ENCODE measurements at regions of chr21 and their contacts with region 1.

Region 1: GRCh38 chr21:28215214-28215954 is 777.3 kb downstream of the LTN1 start:
- DNase-seq: no peak
- ATAC-seq: peak; percentile 93 to 98 (median 96)
- H3K4me3 ChIP-seq: peak overlapping the region; percentile 15
- H3K27ac ChIP-seq: peak overlapping the region; percentile 67
- H3K4me1 ChIP-seq: peaks cover 16% of the 10 kb centered on the region
- H3K27me3 ChIP-seq: no peaks in the 10 kb centered on the region
- CTCF ChIP-seq: no peak

Region 2: GRCh38 chr21:28074676-28075075 is 140.7 kb before region 1 on chr21:
- intact Hi-C with region 1: loop called in 1 of 2 experiments (anchors 10 kb)
- DNase-seq: no peak
- ATAC-seq: no peak
- H3K4me3 ChIP-seq: no peak overlapping the region
- H3K27ac ChIP-seq: no peak overlapping the region
- H3K4me1 ChIP-seq: peaks cover 10% of the 10 kb centered on the region
- H3K27me3 ChIP-seq: no peaks in the 10 kb centered on the region
- CTCF ChIP-seq: no peak

Region 3: DNA sequence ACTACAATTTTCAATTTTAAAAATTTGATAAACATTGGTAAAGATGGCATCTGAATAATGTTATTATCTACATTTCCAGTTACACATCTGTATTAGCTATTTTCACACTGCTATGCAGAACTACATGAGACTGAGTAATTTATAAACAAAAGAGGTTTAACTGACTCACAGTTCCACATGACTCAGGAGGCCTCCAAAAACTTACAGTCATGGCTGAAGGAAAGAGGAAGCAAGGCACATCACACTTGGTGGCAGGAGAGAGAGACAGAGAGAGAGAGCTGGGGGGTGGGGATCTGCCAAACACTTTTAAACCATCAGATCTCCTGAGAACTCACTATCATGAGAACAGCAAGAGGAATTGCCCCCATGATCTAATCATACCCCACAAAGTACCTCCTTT is 72.7 kb before region 1 on chr21:
- intact Hi-C with region 1: no loop called
- DNase-seq: no peak
- ATAC-seq: no peak
- H3K4me3 ChIP-seq: no peak overlapping the region
- H3K27ac ChIP-seq: no peak overlapping the region
- H3K4me1 ChIP-seq: no peaks in the 10 kb centered on the region
- H3K27me3 ChIP-seq: no peaks in the 10 kb centered on the region
- CTCF ChIP-seq: no peak

Region 4: GRCh38 chr21:28283641-28284490 is 68.5 kb after region 1 on chr21:
- intact Hi-C with region 1: loop called in 1 of 2 experiments (anchors 10 kb)
- DNase-seq: no peak
- ATAC-seq: peak in 2 of 4 donors; percentile 45 to 62
- H3K4me3 ChIP-seq: no peak overlapping the region
- H3K27ac ChIP-seq: no peak overlapping the region
- H3K4me1 ChIP-seq: peaks cover 18% of the 10 kb centered on the region
- H3K27me3 ChIP-seq: no peaks in the 10 kb centered on the region
- CTCF ChIP-seq: no peak

Measured in psoas muscle (tissue), 8 donors.